Naive thymus-derived CD8-positive, alpha-beta T cell (primary cell): ENCODE measurements at regions of chr11 and their contacts with region 1.

Region 1: GRCh38 chr11:33736148-33736809 is at the start of gene CD59:
- DNase-seq: peak; percentile 75 to 93 (median 84)
- ATAC-seq: peak; percentile 83 to 86
- H3K4me3 Mint-ChIP-seq: peak within 1 kb of the TSS; percentile 85 to 95 (median 91)
- H3K27ac Mint-ChIP-seq: peak within 1 kb of the TSS; percentile 72 to 93 (median 86)
- H3K4me1 Mint-ChIP-seq: peaks cover 9 to 36% (median 29%) of the 10 kb centered on the region in 4 donors
- H3K27me3 Mint-ChIP-seq: no peaks in the 10 kb centered on the region
- polyA plus RNA-seq, gene CD59: 36.2 to 53.7 (median 47.5) TPM

Region 2: DNA sequence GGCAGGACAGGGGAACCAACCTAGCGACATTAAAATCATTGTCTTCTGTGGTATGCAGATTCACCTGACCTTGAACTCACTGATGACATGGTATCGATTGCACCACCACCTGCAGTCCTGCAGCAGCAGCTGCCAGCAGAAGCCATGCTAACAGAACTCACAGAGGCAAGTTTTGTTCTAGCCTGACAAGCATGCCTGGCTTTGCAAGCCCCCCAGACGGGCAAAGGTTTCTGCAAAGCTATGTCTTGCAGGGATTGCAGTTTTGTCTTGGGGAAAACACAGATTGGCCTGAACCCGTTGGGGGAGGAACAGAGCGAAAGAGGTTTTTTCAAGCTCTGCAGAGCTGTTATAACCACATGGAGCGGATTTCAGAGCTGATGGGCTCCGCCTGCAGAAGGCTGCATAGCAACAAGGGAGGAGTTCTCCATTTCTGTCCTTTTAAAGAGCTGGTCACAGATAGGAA is 258.1 kb before region 1 on chr11:
- POLR2A ChIA-PET with region 1: no interaction called
- DNase-seq: no peak
- ATAC-seq: no peak
- H3K4me3 Mint-ChIP-seq: no peak overlapping the region
- H3K27ac Mint-ChIP-seq: no peak overlapping the region
- H3K4me1 Mint-ChIP-seq: no peaks in the 10 kb centered on the region
- H3K27me3 Mint-ChIP-seq: peaks cover 9 to 32% (median 21%) of the 10 kb centered on the region in 5 donors

Region 3: GRCh38 chr11:33575311-33575710 is 161.0 kb before region 1 on chr11:
- POLR2A ChIA-PET with region 1: no interaction called
- DNase-seq: no peak
- ATAC-seq: no peak
- H3K4me3 Mint-ChIP-seq: no peak overlapping the region
- H3K27ac Mint-ChIP-seq: no peak overlapping the region
- H3K4me1 Mint-ChIP-seq: no peaks in the 10 kb centered on the region
- H3K27me3 Mint-ChIP-seq: peaks cover under 1 to 11% (median 9%) of the 10 kb centered on the region in 5 donors

Region 4: DNA sequence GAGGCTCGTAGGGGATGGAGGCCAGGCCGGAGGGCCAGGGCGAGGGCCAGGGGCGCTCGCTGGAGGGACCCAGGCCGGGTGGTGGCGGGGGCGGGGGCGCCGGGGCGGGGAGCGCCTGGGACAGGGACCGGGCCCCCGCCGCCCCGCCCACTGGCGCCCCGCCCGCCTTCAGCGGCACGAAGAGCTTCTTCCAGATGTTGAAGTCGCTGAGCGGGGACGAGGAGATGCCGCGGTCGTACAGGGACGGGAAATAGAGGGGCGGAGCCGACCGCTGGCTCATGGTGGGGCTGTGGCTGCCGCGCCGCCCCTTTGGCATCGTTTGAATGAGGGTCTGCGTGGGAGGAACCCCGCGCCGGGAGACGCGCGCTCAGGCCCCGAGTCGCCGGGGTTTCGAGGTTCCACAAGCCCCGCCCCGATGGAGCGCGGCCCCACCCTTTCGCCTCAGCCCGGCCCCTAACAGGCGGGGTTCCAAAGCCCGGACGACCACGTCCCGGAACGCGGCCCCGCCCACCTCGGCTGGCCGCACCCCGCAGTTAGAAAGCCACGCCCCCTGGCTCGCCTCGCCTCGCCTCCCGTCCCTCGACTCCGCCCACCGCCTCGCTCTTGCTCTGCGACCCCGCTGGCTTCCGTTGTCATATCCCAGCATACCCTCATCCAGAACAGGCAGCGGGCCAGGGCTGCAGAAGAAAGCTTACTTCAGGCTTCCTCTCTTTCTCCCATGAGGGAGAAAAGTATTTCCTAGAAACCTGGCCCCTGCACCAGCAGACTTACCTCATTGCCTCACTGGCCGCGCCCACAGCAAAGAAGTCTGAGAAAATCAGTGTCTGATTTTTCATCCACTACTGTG is 35.6 kb before region 1 on chr11 and contains the start of gene C11orf91:
- POLR2A ChIA-PET with region 1: interaction called, 15 read pairs
- DNase-seq: peak; percentile 90 to 97 (median 95)
- ATAC-seq: peak; percentile 90 to 91
- H3K4me3 Mint-ChIP-seq: peak within 1 kb of the TSS; percentile 86 to 95 (median 92)
- H3K27ac Mint-ChIP-seq: peak within 1 kb of the TSS; percentile 48 to 89 (median 73)
- H3K4me1 Mint-ChIP-seq: peaks cover 18 to 30% (median 20%) of the 10 kb centered on the region in 4 donors
- H3K27me3 Mint-ChIP-seq: peaks cover 0 to 10% (median 0%) of the 10 kb centered on the region in 5 donors
- polyA plus RNA-seq, gene C11orf91: not detected

Region 5: DNA sequence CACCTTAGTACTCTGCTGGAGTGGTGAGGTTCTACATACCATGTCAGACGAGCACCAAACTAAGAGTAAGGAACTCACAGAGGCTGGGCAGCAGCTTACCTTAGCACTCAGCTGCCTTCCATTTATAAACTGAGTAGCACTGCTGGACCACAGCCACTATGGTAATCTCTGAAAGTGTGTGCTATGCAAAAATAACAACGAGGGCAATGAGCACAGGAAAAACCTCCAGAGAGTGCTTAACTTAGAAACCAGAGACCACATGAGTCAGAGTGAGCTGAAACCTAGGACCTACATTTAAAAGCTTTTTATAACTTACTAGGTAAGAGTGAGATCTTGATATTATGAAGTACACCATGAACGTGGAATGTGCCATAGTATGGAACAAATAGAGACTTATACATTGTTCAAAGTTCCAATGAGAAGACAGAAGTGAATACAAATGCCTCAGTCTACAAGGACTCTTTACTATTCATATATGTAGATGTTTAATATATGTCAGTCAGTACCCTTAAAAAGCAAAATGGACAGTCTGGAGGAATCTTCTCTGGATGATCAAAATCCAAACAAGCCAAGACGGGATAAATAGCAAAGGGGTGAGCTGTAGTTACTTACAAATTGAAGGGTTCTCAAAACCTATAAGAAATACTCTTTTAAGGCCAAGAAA is 17.2 kb after region 1 on chr11:
- POLR2A ChIA-PET with region 1: no interaction called
- DNase-seq: no peak
- ATAC-seq: no peak
- H3K4me3 Mint-ChIP-seq: peak overlapping the region in 1 of 10 donors; percentile 16
- H3K27ac Mint-ChIP-seq: peak overlapping the region in 1 of 10 donors; percentile 8
- H3K4me1 Mint-ChIP-seq: no peaks in the 10 kb centered on the region
- H3K27me3 Mint-ChIP-seq: no peaks in the 10 kb centered on the region

Region 6: GRCh38 chr11:33802414-33802950 is 66.2 kb after region 1 on chr11:
- POLR2A ChIA-PET with region 1: no interaction called
- DNase-seq: no peak
- ATAC-seq: peak; percentile 52 to 74
- H3K4me3 Mint-ChIP-seq: no peak overlapping the region
- H3K27ac Mint-ChIP-seq: no peak overlapping the region
- H3K4me1 Mint-ChIP-seq: peaks cover 0 to 9% (median 4%) of the 10 kb centered on the region in 4 donors
- H3K27me3 Mint-ChIP-seq: peaks cover 44 to 62% (median 57%) of the 10 kb centered on the region in 5 donors